CD4-positive, alpha-beta memory T cell (primary cell): ENCODE measurements at regions of chr1 and their contacts with region 1.

Region 1: GRCh38 chr1:53238197-53239155 is at the start of gene MAGOH:
- DNase-seq: peak; percentile 93 to 95 (median 94)
- H3K4me3 ChIP-seq: peak within 1 kb of the TSS; percentile 87 to 96
- H3K4me3 Mint-ChIP-seq: peak within 1 kb of the TSS; percentile 96 to 99 (median 97)
- H3K27ac ChIP-seq: peak within 1 kb of the TSS; percentile 87
- H3K27ac Mint-ChIP-seq: peak within 1 kb of the TSS; percentile 97 to 99 (median 98)
- H3K4me1 ChIP-seq: peaks cover 31% of the 10 kb centered on the region
- H3K4me1 Mint-ChIP-seq: peaks cover 21 to 36% (median 29%) of the 10 kb centered on the region in 4 donors
- H3K27me3 ChIP-seq: no peaks in the 10 kb centered on the region
- H3K27me3 Mint-ChIP-seq: no peaks in the 10 kb centered on the region
- total RNA-seq, gene MAGOH: 46.7 to 49.9 TPM

Region 2: GRCh38 chr1:53220171-53220961 is 18.1 kb before region 1 on chr1 and contains the start of gene CZIB:
- CTCF ChIA-PET with region 1: no interaction called
- POLR2A ChIA-PET with region 1: interaction called, 38 read pairs
- intact Hi-C with region 1: loop called (anchors 1 kb)
- DNase-seq: peak; percentile 90 to 95 (median 91)
- H3K4me3 ChIP-seq: peak within 1 kb of the TSS; percentile 49 to 81
- H3K4me3 Mint-ChIP-seq: peak within 1 kb of the TSS; percentile 88 to 95 (median 94)
- H3K27ac ChIP-seq: peak within 1 kb of the TSS; percentile 95
- H3K27ac Mint-ChIP-seq: peak within 1 kb of the TSS; percentile 91 to 99 (median 98)
- H3K4me1 ChIP-seq: peaks cover 17% of the 10 kb centered on the region
- H3K4me1 Mint-ChIP-seq: peaks cover 16 to 28% (median 22%) of the 10 kb centered on the region in 4 donors
- H3K27me3 ChIP-seq: no peaks in the 10 kb centered on the region
- H3K27me3 Mint-ChIP-seq: no peaks in the 10 kb centered on the region
- total RNA-seq, gene CZIB: 82.4 to 82.5 TPM

Region 3: GRCh38 chr1:53266106-53266505 is 27.6 kb after region 1 on chr1:
- CTCF ChIA-PET with region 1: no interaction called
- POLR2A ChIA-PET with region 1: no interaction called
- intact Hi-C with region 1: no loop called
- DNase-seq: no peak
- H3K4me3 ChIP-seq: no peak overlapping the region
- H3K4me3 Mint-ChIP-seq: no peak overlapping the region
- H3K27ac ChIP-seq: no peak overlapping the region
- H3K27ac Mint-ChIP-seq: peak overlapping the region in 1 of 7 donors; percentile 69
- H3K4me1 ChIP-seq: no peaks in the 10 kb centered on the region
- H3K4me1 Mint-ChIP-seq: no peaks in the 10 kb centered on the region
- H3K27me3 ChIP-seq: no peaks in the 10 kb centered on the region
- H3K27me3 Mint-ChIP-seq: no peaks in the 10 kb centered on the region

Region 4: GRCh38 chr1:53316766-53317581 is 78.5 kb after region 1 on chr1:
- CTCF ChIA-PET with region 1: no interaction called
- POLR2A ChIA-PET with region 1: no interaction called
- intact Hi-C with region 1: no loop called
- DNase-seq: peak in 1 of 5 donors; percentile 17
- H3K4me3 ChIP-seq: no peak overlapping the region
- H3K4me3 Mint-ChIP-seq: no peak overlapping the region
- H3K27ac ChIP-seq: no peak overlapping the region
- H3K27ac Mint-ChIP-seq: peak overlapping the region in 2 of 7 donors; percentile 25 to 73
- H3K4me1 ChIP-seq: no peaks in the 10 kb centered on the region
- H3K4me1 Mint-ChIP-seq: peaks cover 0 to 1% (median 0%) of the 10 kb centered on the region in 4 donors
- H3K27me3 ChIP-seq: no peaks in the 10 kb centered on the region
- H3K27me3 Mint-ChIP-seq: no peaks in the 10 kb centered on the region

Region 5: DNA sequence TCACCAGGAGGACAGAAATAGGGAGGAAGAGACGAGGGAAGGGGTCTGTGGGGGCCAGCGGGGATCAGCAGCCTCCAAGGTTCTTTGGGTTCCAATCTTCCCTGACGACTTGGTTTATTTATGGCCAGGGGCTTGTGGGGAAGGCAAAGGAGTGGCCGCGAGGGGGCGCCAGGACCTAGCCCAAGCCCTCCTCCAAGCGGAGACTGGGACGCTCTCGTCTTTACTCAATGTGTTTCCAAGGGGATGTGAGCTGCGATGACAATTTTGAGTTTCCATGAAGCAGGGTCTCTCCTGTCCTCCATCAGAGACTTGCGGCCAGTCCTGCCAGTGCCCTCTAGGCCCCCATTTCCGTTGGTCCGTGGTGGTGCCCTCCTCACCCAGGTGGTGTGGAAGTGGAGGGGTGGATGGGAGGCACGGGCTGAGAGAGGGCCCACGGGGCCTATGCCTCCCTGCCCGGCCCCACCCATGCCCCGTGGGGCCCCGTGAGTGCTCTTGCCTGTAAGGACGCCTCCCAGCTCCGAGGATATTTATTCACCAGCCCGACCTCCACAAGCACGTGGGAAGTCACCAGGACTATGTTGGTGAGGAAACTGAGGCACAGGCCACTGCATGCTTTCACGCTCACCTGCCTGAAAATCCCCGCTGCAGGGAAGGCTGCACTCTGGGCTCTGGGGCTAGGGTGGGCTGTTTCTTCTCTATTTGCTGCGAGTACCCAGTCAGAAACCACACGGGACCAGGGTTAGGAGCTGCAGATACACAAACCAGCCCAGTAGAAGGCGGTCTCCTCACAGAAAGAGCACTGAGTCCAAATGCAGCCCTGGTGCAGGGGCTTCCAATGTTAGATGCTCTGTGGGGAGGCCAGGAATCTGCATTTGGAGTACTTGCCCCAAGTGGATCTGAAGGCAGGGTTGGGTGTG is 247.3 kb after region 1 on chr1:
- CTCF ChIA-PET with region 1: no interaction called
- POLR2A ChIA-PET with region 1: no interaction called
- intact Hi-C with region 1: no loop called
- DNase-seq: peak in 4 of 5 donors; percentile 34 to 39 (median 38)
- H3K4me3 ChIP-seq: no peak overlapping the region
- H3K4me3 Mint-ChIP-seq: peak overlapping the region in 1 of 8 donors; percentile 58
- H3K27ac ChIP-seq: no peak overlapping the region
- H3K27ac Mint-ChIP-seq: no peak overlapping the region
- H3K4me1 ChIP-seq: no peaks in the 10 kb centered on the region
- H3K4me1 Mint-ChIP-seq: peaks cover 0 to 10% (median 5%) of the 10 kb centered on the region in 4 donors
- H3K27me3 ChIP-seq: no peaks in the 10 kb centered on the region
- H3K27me3 Mint-ChIP-seq: peaks cover 17 to 18% of the 10 kb centered on the region in 2 donors